ENCODE measurements at regions of chr11 and their contacts with region 1.

Region 1: DNA sequence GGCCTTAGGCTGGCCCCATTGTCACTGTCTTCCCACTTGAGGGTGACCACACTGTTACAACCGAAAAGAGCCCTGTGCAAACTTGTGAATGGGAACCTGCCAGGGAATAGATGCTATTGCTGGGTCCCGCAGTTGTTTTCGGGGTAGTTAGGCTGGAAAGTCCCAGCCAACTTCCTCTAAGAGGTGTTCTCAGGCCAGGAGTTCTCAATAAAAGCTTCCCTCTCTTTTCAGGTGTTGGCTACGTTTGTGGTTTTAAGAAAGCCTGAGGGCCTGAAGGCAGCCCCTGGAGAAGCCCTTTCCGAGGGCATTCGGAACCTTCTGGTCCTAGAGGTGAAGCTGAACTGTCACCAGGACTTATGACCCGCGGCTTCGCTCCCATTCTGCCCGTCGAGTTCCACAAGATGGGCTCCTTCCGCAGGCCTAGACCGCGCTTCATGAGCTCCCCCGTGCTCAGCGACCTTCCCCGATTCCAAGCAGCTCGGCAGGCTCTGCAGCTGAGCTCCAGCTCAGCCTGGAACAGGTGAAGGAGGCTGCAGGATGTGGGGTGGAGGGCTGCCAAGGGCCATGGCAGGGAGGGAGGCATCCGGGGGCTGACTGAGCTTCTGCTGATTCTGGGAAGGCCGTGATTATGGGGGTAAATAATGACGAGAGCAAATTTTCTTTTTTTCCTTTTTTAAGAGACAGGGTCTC is 104.8 kb downstream of the PRR5L start:
- DNase-seq: no peak
- CTCF ChIP-seq: no peak

Region 2: GRCh38 chr11:36411202-36411640 is 10.3 kb after region 1 on chr11:
- CTCF ChIA-PET with region 1: interaction called, 17 read pairs
- POLR2A ChIA-PET with region 1: no interaction called
- DNase-seq: peak; percentile 50
- CTCF ChIP-seq: no peak